OCI-LY7 (cell line): ENCODE measurements at regions of chr1 and their contacts with region 1.

Region 1: DNA sequence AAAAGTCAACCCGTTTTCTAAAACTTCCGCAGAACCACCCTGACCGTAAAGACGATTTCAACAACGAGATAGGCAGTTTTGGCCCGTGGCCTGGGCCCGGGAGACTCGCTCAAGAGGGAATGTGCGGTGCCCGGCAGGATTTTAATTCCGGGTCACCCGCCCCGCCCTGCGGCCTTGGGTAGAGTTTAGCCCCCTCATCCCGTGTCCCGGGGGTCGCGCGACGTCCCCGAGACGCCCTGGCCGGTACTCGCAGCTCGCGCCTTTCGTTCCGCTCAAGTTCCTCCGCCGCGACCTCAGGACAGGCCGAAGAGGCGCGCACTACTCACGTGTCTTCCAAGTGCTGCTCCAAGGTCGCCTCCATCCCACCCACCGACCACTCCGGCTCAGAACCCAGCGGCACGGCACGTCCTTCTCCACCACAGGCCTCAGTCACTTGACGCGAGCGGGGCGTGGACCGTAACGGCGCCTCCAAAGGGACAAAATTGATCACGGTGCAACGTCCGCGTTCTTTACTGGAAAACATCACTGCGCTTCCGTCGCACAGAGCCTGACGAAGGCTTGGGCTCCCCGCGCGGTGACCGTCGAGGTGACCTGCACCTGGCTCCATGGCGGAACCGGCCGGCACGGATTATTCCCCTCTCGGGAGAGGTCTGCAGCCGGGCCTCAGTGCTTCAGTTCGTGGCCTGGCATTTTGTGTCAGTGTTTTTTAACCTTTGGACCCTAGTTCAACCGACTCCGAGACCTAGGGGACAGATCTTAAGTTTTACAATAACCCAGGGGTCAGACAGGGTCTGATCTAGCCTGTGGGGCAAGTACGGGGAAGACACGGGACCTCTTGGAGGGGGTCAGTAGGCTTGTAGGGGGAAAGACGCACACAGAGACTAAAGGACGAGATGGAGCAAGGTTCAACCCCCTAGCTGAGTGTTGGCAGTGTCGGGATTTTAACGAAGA is at the start of gene LAMTOR5:
- DNase-seq: peak; percentile 91
- H3K4me3 ChIP-seq: peak within 1 kb of the TSS; percentile 80
- H3K27ac ChIP-seq: peak within 1 kb of the TSS; percentile 65
- H3K4me1 ChIP-seq: peaks cover 24% of the 10 kb centered on the region
- CTCF ChIP-seq: 0 out of 2 replicates have a peak, but pooled peaks have one; percentile 15
- total RNA-seq, gene LAMTOR5: 109 and 111 TPM in 2 replicates

Region 2: DNA sequence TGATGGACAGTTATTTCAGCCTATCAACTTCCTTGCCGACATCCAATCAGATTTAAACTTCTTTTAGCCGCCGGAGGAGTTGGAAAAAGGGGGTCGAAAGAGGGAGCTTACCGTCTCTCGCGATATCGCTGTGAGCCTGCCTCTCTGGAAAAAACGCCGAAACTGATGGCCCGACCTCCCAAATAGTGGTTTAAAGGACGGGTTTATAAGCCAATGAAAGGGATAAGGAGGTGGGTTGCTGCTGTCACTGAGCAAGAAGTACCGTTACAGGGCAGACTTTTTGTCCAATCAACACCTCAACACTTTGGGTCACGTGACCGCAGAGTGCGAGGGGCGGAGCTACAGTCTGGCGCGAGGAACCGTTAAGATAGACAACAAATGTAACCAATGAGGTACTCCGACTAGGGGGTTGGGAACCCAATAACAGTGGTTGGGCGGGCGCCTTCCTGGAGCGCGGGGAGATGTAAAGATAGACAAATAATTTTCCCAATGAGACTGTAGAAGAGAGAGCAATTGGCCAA is 68.6 kb before region 1 on chr1 and contains the start of gene RBM15:
- CTCF ChIA-PET with region 1: interaction called, 6 read pairs
- POLR2A ChIA-PET with region 1: interaction called, 29 read pairs
- intact Hi-C with region 1: loop called (anchors 1 kb)
- DNase-seq: peak; percentile 100
- H3K4me3 ChIP-seq: peak within 1 kb of the TSS; percentile 93
- H3K27ac ChIP-seq: peak within 1 kb of the TSS; percentile 92
- H3K4me1 ChIP-seq: peaks cover 28% of the 10 kb centered on the region
- CTCF ChIP-seq: no peak
- total RNA-seq, gene RBM15: 221 and 231 TPM in 2 replicates